ENCODE measurements at regions of chr3 and their contacts with region 1.

Region 1: DNA sequence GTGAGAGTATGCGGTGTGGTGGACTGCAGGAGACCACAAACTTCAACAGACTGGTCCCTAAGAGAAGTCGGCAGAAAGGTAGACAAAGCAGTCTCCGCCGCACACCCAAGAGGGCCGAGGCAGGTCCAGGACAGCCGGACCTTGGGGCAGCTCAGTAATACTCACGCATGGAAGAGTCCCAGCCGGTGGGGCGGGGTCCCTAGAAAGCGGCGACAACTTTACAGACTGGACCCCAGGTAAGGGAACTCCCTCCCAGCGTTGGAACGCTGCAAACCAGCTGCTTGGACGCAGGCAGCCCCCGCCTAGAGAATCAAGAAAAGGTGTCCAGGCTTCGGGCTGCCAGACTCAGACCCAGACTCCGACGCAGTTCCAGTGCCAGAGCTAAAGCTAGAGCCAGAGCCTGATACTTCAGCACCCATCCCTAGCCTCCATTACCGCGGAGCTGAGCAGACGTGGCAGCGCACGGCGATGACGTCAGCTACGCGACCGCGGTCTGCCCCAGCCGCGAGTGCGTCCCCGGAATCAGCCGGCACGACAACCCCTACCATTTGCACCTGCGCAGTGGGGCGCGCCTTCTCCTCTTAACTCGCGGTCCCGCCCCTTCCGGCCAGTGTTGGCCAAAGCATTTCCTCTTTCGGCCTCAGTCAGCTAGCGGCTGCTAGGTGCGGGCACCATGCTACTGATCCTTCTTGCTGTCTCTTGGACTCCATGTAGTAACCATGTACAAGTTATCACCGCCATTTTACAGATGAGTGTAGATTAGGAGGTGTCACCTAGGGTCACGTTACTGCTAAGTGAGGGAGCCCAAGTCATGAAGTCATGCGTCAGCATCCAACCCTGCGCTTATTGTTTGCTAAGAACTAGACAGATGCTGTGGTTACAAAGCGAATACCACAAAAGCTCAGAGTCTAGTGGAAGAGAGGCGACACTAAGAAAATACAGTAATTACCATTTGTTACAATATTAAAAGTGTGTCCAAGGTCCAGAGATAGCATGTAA is at the start of gene TMEM39A:
- DNase-seq: peak; percentile 98
- H3K4me3 Mint-ChIP-seq: peak within 1 kb of the TSS; percentile 95
- H3K27ac Mint-ChIP-seq: peak within 1 kb of the TSS; percentile 97
- H3K4me1 Mint-ChIP-seq: peaks cover 38% of the 10 kb centered on the region
- H3K27me3 Mint-ChIP-seq: no peaks in the 10 kb centered on the region
- total RNA-seq, gene TMEM39A: 50.4 and 58.4 TPM in 2 replicates

Region 2: DNA sequence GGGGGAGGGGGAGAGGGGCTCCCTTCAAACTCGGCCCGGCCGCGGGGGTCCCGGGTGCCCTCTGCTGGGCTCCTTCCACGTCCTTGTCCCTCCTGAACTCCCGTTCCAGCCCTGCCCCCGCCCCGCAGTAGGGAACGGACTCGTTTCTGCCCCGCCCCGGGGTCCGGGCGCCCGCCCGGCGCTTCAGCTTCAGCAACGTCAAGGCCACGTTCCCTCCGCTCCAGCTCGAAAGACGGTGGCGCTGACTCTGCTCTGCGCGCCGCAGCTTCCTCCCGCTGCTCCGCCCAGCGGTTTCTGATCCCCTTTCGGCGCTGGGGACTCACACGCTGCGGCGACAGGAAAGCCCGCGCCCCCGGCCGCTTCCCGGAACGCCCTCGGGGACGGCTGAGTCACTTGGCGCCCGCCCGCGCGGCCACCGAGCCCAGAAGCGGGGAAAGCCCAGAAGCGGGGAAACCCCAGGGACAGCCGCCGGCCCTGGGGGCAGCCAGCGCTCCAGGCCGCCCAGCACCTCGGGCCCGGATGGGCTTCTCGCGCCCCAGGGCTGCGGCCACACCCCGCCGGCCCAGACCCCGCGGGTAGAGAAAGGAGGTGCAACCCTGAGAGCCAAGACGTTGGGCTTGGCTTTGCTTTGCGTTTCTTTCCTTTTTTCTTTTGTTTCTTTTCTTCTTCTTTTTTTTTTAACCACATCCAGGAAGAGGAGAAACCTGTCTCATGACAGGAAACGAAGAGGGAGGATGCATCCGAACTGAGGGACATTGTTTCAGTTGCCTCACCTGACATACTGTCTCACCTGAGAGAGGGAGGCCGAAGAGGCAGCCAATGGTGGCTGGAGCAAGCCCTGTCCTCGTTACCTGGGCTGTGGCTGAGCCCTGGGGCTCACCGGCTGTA is 140.4 kb before region 1 on chr3:
- intact Hi-C with region 1: loop called (anchors 1 kb)
- DNase-seq: peak; percentile 87
- H3K4me3 Mint-ChIP-seq: peak overlapping the region; percentile 77
- H3K27ac Mint-ChIP-seq: peak overlapping the region; percentile 83
- H3K4me1 Mint-ChIP-seq: peaks cover 47% of the 10 kb centered on the region
- H3K27me3 Mint-ChIP-seq: peaks cover 2% of the 10 kb centered on the region

Region 3: DNA sequence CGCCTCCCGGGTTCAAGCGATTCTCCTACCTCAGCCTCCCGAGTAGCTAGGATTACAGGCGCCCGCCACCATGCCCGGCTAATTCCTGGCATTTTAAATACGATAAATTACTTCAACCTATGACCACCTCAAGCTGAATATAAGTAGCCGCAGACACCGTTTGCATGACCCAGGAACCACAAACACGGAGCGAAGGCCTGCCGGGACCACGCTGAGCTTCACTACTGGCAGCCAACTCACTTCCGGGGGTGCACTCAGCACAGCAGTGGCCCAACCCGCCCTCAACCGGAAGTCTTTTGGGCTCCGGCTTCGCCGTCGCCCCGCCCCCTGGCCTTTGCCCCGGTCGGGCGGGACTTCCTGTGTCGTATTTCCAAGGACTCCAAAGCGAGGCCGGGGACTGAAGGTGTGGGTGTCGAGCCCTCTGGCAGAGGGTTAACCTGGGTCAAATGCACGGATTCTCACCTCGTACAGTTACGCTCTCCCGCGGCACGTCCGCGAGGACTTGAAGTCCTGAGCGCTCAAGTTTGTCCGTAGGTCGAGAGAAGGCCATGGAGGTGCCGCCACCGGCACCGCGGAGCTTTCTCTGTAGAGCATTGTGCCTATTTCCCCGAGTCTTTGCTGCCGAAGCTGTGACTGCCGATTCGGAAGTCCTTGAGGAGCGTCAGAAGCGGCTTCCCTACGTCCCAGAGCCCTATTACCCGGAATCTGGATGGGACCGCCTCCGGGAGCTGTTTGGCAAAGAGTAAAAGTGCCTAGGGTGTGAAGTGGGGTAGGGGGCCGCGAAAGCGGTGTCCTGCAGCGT is 34.9 kb after region 1 on chr3 and contains the start of gene TIMMDC1:
- intact Hi-C with region 1: loop called (anchors 1 kb)
- DNase-seq: peak; percentile 96
- H3K4me3 Mint-ChIP-seq: peak within 1 kb of the TSS; percentile 96
- H3K27ac Mint-ChIP-seq: peak within 1 kb of the TSS; percentile 95
- H3K4me1 Mint-ChIP-seq: peaks cover 32% of the 10 kb centered on the region
- H3K27me3 Mint-ChIP-seq: no peaks in the 10 kb centered on the region
- total RNA-seq, gene TIMMDC1: 93.6 and 101 TPM in 2 replicates

Region 4: DNA sequence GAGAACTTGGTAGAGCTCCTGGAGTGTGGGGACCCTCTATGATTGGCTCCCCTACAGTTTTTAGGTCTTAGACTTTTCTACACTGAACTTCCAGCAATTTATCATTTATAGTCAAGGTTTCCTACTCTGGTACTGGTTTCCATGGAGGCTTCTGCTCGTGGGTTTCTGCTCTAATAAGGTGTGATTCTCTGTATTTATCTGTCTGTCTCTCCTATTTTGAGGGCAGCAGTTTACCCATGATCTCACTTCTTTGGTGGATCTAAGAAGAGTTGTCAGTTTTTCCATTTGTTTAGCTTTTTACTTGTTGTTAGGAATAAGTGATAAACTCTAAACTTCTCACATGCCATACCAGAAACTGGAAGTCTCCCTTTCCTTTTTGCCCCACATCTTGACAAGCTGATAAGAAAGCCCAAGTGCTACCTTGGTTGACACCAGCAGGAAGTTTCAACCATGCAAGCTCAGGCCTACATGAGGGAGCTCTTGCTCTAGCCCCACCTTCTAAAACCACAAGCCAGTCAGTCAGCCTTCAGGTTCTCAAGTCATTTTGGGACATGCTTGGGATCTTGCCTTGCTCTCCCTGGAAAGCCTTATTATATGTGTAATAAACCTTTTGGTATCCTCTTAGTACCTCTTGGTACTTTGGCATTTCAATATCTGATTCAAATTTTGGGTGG is 44.8 kb after region 1 on chr3:
- intact Hi-C with region 1: loop called (anchors 1 kb)
- DNase-seq: peak; percentile 22
- H3K4me3 Mint-ChIP-seq: no peak overlapping the region
- H3K27ac Mint-ChIP-seq: peak overlapping the region; percentile 76
- H3K4me1 Mint-ChIP-seq: peaks cover 39% of the 10 kb centered on the region
- H3K27me3 Mint-ChIP-seq: no peaks in the 10 kb centered on the region

Region 5: GRCh38 chr3:119579366-119580165 is 116.1 kb after region 1 on chr3 and contains the start of gene ADPRH:
- intact Hi-C with region 1: loop called (anchors 1 kb)
- DNase-seq: peak; percentile 44
- H3K4me3 Mint-ChIP-seq: peak within 1 kb of the TSS; percentile 84
- H3K27ac Mint-ChIP-seq: peak within 1 kb of the TSS; percentile 85
- H3K4me1 Mint-ChIP-seq: peaks cover 25% of the 10 kb centered on the region
- H3K27me3 Mint-ChIP-seq: no peaks in the 10 kb centered on the region
- total RNA-seq, gene ADPRH: 5.5 and 6.3 TPM in 2 replicates

Region 6: GRCh38 chr3:120742198-120742849 is 1278.9 kb after region 1 on chr3 and contains the starts of genes GTF2E1 and RABL3:
- intact Hi-C with region 1: loop called (anchors 10 kb)
- DNase-seq: peak; percentile 95
- H3K4me3 Mint-ChIP-seq: peak within 1 kb of the TSS; percentile 95
- H3K27ac Mint-ChIP-seq: peak within 1 kb of the TSS; percentile 97
- H3K4me1 Mint-ChIP-seq: peaks cover 15% of the 10 kb centered on the region
- H3K27me3 Mint-ChIP-seq: no peaks in the 10 kb centered on the region
- total RNA-seq, gene GTF2E1: 23.3 and 24.7 TPM in 2 replicates
- total RNA-seq, gene RABL3: 26.6 and 30.8 TPM in 2 replicates

Measured in activated T-helper 2 cell treated with anti-CD3 and anti-CD28 coated beads, Interferon-gamma antibody, Interleukin-2, Interleukin-4, amounts not matched to agents 10 μg/mL and 5 μg/mL and 100 μg/mL, durations not matched to agents 14 hours and 24 hours and 36 hours (primary cell).